ENCODE measurements at regions of chr11 and their contacts with region 1.

Region 1: GRCh38 chr11:86047275-86047991 is 21.5 kb downstream of the PICALM start:
- DNase-seq: peak; percentile 75
- ATAC-seq: peak; percentile 73
- H3K4me3 Mint-ChIP-seq: peak overlapping the region; percentile 65
- H3K27ac Mint-ChIP-seq: peak overlapping the region; percentile 96
- H3K4me1 Mint-ChIP-seq: peaks cover 96% of the 10 kb centered on the region
- H3K27me3 Mint-ChIP-seq: no peaks in the 10 kb centered on the region

Region 2: GRCh38 chr11:86062719-86063118 is 15.3 kb after region 1 on chr11:
- CTCF ChIA-PET with region 1: interaction called, 33 read pairs
- POLR2A ChIA-PET with region 1: interaction called, 9 read pairs
- intact Hi-C with region 1: loop called in 1 of 2 experiments (anchors 1 kb)
- DNase-seq: no peak
- ATAC-seq: no peak
- H3K4me3 Mint-ChIP-seq: peak overlapping the region; percentile 58
- H3K27ac Mint-ChIP-seq: peak overlapping the region; percentile 80
- H3K4me1 Mint-ChIP-seq: peaks cover 70% of the 10 kb centered on the region
- H3K27me3 Mint-ChIP-seq: no peaks in the 10 kb centered on the region

Region 3: DNA sequence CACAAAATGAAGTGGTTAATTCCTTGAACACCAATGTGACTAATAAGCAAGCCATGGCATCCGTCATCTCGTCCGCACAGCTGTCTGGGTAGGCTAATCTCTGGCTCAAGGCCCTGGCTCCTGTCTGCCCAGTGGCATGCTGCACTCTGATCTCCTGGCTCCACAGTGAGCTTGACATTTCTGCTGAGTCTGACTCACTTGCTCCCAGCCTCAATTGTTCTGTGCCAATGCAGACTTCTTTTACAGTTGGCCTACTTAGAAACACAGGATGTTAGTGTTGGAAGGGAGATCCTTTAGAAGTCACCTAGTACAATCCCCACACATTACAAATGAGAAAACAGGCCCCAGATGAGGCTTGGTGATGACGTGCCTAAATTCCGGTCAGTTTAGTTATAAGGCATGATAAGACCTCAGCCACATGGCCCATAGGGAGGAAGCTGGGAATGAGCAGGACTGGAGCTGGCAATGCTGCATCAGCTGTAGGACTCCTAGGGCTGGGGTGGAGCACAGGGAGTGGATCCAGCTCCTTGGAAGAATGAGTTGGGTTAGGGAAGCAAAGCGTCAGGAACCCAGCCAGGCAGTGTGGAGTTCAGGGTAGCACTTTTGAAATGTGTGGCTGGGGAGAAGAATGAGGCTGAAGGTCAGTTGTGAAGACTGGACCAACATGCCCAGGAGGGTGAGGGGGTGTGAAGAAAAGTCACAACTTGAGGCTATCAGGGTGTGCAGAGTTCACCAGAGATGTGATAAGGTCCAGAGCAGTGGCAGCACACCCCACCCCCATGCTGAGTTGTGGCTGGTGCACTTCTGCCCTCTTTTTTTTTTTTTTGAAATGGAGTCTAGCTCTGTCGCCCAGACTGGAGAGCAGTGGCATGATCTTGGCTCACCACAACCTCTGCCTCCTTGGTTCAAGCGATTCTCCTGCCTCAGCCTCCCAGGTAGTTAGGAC is 126.9 kb after region 1 on chr11:
- CTCF ChIA-PET with region 1: no interaction called
- POLR2A ChIA-PET with region 1: no interaction called
- intact Hi-C with region 1: loop called in 1 of 2 experiments (anchors 1 kb)
- DNase-seq: peak; percentile 30
- ATAC-seq: peak; percentile 18
- H3K4me3 Mint-ChIP-seq: no peak overlapping the region
- H3K27ac Mint-ChIP-seq: no peak overlapping the region
- H3K4me1 Mint-ChIP-seq: peaks cover 31% of the 10 kb centered on the region
- H3K27me3 Mint-ChIP-seq: no peaks in the 10 kb centered on the region

Region 4: DNA sequence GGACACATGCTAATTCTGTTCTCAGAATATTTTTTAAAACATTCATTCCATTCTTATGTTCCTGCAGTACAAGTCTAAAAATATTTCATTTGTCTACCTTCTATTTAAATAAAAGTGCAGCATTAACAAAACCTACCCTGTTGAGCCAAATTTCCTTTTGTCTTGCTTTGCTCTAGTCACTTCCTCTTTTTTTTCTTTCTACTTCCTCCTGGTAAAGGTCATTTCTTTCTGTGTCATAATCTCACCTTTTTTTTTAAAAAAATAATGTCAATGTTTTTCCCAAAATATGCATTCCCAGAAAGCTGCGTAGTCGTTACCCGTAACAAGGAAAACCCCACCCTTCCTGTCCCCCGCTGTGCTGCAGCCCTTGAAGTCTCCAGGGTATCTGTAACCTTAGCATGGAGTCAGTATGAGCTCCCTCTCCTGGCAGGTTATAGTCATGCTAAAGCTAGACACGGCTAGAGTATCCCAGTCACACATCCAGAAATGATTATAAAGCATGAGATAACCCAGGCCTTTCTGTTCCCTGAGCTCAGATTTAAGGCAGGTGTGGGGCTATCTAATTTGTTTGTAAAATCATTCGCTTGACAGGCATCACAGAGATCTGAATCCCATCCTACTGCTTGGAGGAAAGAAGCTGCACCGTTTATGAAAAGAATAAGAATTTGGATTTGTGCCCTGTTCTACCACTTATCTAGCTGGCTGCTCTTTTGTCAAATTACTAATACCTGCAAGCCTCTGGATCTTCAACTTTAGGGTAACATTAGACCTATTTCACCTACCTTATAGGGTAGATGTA is 146.1 kb after region 1 on chr11:
- CTCF ChIA-PET with region 1: interaction called, 57 read pairs
- POLR2A ChIA-PET with region 1: no interaction called
- intact Hi-C with region 1: loop called (anchors 1 kb)
- DNase-seq: peak; percentile 74
- ATAC-seq: peak; percentile 99
- H3K4me3 Mint-ChIP-seq: peak overlapping the region; percentile 53
- H3K27ac Mint-ChIP-seq: peak overlapping the region; percentile 82
- H3K4me1 Mint-ChIP-seq: peaks cover 27% of the 10 kb centered on the region
- H3K27me3 Mint-ChIP-seq: peaks cover 6% of the 10 kb centered on the region

Region 5: DNA sequence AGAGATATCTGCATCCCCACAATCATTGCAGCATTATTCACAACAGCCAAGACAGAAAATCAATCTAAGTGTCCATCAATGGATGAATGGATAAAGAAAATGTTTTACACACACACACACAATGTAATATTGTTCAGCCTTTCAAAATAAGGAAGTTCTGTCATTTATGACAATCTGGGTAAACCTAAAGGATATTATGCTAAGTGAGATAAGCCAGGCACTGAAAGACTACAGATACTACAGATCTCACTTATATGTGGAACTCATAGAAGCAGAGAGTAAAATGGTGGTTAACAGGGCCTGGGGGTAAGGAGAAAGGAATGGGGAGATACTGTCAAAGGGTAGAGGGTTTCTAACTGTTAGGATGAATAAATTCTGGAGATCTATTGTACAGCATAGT is 161.1 kb after region 1 on chr11:
- CTCF ChIA-PET with region 1: no interaction called
- POLR2A ChIA-PET with region 1: no interaction called
- intact Hi-C with region 1: no loop called
- DNase-seq: no peak
- ATAC-seq: no peak
- H3K4me3 Mint-ChIP-seq: no peak overlapping the region
- H3K27ac Mint-ChIP-seq: no peak overlapping the region
- H3K4me1 Mint-ChIP-seq: peaks cover 42% of the 10 kb centered on the region
- H3K27me3 Mint-ChIP-seq: no peaks in the 10 kb centered on the region

Region 6: DNA sequence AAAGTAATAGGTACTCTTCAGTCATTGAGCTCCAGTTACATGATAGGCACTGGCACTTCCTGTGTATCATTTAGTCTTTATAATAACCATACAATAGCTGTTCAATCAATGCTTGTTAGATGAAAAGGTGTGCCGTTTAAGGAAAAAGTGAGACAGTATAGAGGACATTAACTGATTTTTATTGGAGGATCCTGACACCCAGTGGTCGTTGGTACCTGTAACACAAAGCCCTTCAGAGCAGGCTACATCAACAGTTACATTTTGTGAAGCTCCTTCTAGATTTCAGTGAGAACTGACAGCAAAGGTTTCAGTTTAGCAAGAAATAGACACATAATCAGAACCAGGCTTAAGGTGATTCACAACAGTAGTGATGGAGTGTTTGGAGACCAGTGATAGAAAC is 371.5 kb after region 1 on chr11:
- CTCF ChIA-PET with region 1: no interaction called
- POLR2A ChIA-PET with region 1: no interaction called
- intact Hi-C with region 1: no loop called
- DNase-seq: peak; percentile 19
- ATAC-seq: peak; percentile 83
- H3K4me3 Mint-ChIP-seq: no peak overlapping the region
- H3K27ac Mint-ChIP-seq: no peak overlapping the region
- H3K4me1 Mint-ChIP-seq: peaks cover 10% of the 10 kb centered on the region
- H3K27me3 Mint-ChIP-seq: no peaks in the 10 kb centered on the region

Measured in activated CD4-positive, alpha-beta T cell treated with anti-CD3 and anti-CD28 coated beads for 36 hours (primary cell).